ENCODE measurements at regions of chr18 and their contacts with region 1.

Region 1: DNA sequence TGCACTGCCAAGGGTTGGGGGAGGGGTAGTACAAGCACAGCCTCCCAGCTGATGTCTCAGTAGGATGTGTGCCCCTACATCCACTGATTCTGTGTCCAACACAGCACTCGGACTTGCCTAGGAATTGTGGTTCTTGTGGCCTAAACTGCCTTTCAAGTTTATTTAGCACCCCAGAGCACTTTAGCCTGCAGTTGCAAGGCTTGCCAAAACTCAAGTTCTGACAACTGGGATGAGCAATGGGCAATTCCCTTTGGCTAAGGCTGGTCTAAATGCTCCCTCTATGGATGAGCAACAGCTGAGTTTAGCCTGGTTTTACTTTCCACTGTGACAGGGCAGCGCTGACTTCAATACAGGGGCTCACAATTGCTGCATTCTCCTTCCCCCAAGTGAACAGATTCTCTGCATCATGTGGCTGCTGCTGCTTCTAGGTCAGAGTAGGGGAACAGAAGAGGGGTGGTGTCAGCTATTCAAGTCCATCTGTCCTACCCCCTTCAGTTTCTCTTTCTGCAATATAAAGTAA is 471.5 kb downstream of the PIK3C3 start:
- DNase-seq: peak; percentile 14
- H3K4me3 Mint-ChIP-seq: no peak overlapping the region
- H3K27ac Mint-ChIP-seq: no peak overlapping the region
- H3K4me1 Mint-ChIP-seq: no peaks in the 10 kb centered on the region
- H3K27me3 Mint-ChIP-seq: no peaks in the 10 kb centered on the region
- CTCF ChIP-seq: no peak

Region 2: DNA sequence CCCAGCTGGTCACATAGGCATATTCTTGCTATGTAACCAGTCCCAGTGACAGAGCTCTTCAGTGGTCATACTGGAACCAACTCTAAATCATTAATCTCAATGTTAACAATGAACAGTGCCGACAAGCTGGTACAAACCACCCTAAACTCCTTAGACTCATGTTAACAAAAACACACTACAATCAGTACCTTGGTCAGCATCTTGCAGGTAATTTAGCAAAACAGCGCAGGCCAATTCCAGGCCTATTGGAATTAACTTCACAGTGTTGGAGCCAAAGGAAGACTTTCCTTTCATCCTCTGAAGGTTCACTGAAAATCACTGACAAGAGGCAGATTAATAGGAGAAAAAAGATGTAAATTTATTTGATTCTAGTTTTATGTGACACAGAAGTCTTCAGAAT is 75.1 kb before region 1 on chr18:
- CTCF ChIA-PET with region 1: no interaction called
- POLR2A ChIA-PET with region 1: no interaction called
- intact Hi-C with region 1: loop called (anchors 2 kb)
- DNase-seq: no peak
- H3K4me3 Mint-ChIP-seq: no peak overlapping the region
- H3K27ac Mint-ChIP-seq: no peak overlapping the region
- H3K4me1 Mint-ChIP-seq: no peaks in the 10 kb centered on the region
- H3K27me3 Mint-ChIP-seq: no peaks in the 10 kb centered on the region
- CTCF ChIP-seq: no peak

Region 3: DNA sequence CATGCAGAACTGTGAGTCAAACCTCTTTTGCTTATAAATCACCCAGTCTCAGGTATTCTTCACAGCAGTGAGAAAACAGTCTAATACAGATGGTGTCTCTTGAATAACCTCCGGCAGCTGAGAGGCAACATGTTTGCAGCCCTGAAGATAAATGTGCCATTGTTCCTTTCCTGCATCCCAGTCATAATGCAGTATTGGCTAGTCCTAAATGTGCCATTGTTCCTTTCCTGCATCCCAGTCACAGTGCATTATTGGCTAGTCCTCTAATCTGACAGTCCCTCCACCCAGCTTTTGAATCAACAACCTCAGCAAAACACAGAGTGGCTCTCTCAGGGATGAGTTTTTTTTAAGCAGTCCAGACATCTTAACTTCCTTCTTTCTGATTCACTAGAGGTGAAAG is 138.2 kb after region 1 on chr18:
- CTCF ChIA-PET with region 1: no interaction called
- POLR2A ChIA-PET with region 1: no interaction called
- intact Hi-C with region 1: no loop called
- DNase-seq: no peak
- H3K4me3 Mint-ChIP-seq: no peak overlapping the region
- H3K27ac Mint-ChIP-seq: no peak overlapping the region
- H3K4me1 Mint-ChIP-seq: no peaks in the 10 kb centered on the region
- H3K27me3 Mint-ChIP-seq: peaks cover 31% of the 10 kb centered on the region
- CTCF ChIP-seq: no peak

Region 4: DNA sequence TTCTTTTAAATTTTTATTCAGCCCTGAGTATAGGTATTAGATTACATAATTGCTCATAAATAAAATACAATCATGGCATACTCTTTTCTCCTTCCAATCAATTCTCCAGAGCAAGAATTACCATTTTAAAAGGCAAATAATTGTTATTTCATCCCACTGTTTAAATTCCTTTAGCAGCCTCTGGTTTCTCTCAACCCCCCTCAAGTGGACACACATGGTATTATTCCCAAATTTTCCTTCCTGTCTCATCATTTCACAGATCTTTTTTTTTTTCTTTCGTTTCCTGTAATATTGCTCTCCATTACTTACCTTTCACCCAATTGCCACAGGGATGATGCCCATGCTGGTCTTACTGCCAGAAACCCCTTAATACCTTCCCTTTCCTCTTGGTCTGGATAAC is 303.7 kb after region 1 on chr18:
- CTCF ChIA-PET with region 1: no interaction called
- POLR2A ChIA-PET with region 1: no interaction called
- intact Hi-C with region 1: no loop called
- DNase-seq: peak; percentile 9
- H3K4me3 Mint-ChIP-seq: no peak overlapping the region
- H3K27ac Mint-ChIP-seq: no peak overlapping the region
- H3K4me1 Mint-ChIP-seq: no peaks in the 10 kb centered on the region
- H3K27me3 Mint-ChIP-seq: no peaks in the 10 kb centered on the region
- CTCF ChIP-seq: peak; percentile 23